Mammary epithelial cell (primary cell): ENCODE measurements at regions of chr10 and their contacts with region 1.

Region 1: GRCh38 chr10:21617267-21617666 is 83.2 kb downstream of the MLLT10 start:
- DNase-seq: no peak
- H3K4me3 ChIP-seq: no peak overlapping the region
- H3K27ac ChIP-seq: no peak overlapping the region
- H3K4me1 ChIP-seq: no peaks in the 10 kb centered on the region
- H3K27me3 ChIP-seq: no peaks in the 10 kb centered on the region
- CTCF ChIP-seq: no peak

Region 2: GRCh38 chr10:21572578-21572977 is 44.7 kb before region 1 on chr10:
- CTCF ChIA-PET with region 1: no interaction called
- dilution Hi-C with region 1: loop called (anchors 5 kb)
- in situ Hi-C with region 1: no loop called
- intact Hi-C with region 1: no loop called
- DNase-seq: no peak
- H3K4me3 ChIP-seq: no peak overlapping the region
- H3K27ac ChIP-seq: no peak overlapping the region
- H3K4me1 ChIP-seq: no peaks in the 10 kb centered on the region
- H3K27me3 ChIP-seq: no peaks in the 10 kb centered on the region
- CTCF ChIP-seq: no peak